Aorta (tissue), 5 donors: ENCODE measurements at regions of chr1 and their contacts with region 1.

Region 1: DNA sequence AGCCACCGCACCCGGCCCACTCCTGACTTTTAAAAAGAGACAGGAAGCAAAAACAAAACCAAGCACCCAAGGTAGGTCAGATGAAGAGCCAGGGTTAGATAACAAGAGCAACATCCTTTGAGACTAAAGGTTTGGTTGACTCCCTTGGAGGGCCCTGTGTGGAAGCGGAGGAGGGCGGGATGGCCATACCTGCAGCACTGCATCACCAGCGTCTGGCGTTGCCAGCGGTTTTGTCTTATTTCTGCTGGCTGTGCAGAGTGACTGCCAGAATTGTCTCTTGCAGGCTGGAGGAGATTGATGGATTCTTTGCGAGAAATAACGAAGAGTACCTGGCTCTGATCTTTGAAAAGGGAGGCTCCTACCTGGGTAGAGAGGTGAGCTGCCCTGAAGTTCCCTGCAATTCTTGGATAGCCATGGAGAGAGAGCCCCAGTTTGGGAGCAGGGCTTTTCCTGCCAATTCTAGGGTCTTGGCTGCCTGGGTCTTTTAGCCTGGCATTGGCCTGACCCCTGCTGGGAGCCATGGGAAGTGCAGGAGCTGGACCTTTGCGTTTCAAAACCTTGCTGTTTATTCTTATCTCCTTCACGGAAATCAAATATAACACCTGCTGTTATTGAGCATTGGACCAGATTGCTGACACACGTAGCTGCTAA is 24.0 kb downstream of the QSOX1 start:
- DNase-seq: peak; percentile 62 to 89
- ATAC-seq: peak; percentile 69
- H3K4me3 ChIP-seq: no peak overlapping the region
- H3K27ac ChIP-seq: no peak overlapping the region
- H3K4me1 ChIP-seq: no peaks in the 10 kb centered on the region
- H3K27me3 ChIP-seq: no peaks in the 10 kb centered on the region

Region 2: DNA sequence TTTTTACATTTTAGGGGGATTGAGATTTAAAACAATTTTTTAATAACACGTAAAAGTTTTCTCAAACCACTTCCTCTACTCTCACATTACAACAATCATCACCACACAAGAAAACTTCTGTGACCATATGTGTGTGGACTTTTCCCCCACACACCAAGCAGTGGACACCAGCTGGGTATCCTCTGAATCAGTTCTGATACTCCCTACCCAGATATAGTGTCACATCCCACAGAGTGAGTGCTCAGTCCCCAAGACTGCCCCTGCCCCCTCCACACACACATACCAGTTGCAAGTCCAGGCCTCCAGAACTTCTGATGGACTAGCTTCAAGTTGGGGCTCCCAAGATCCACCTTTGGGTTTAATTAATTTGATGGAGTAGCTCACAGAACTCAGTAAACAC is 77.2 kb before region 1 on chr1:
- intact Hi-C with region 1: loop called (anchors 5 to 10 kb)
- DNase-seq: no peak
- ATAC-seq: no peak
- H3K4me3 ChIP-seq: no peak overlapping the region
- H3K27ac ChIP-seq: no peak overlapping the region
- H3K4me1 ChIP-seq: no peaks in the 10 kb centered on the region
- H3K27me3 ChIP-seq: no peaks in the 10 kb centered on the region